ENCODE measurements at regions of chr3 and their contacts with region 1.

Region 1: GRCh38 chr3:196195664-196196265 is 15.4 kb downstream of the ZDHHC19 start:
- DNase-seq: peak in 1 of 2 donors; percentile 48
- ATAC-seq: no peak
- H3K4me3 ChIP-seq: no peak overlapping the region
- H3K27ac ChIP-seq: no peak overlapping the region
- H3K4me1 ChIP-seq: peaks cover 11% of the 10 kb centered on the region
- H3K27me3 ChIP-seq: no peaks in the 10 kb centered on the region
- CTCF ChIP-seq: no peak

Region 2: GRCh38 chr3:196023947-196024346 is 171.8 kb before region 1 on chr3:
- intact Hi-C with region 1: loop called in 1 of 2 experiments (anchors 2 kb)
- DNase-seq: no peak
- ATAC-seq: no peak
- H3K4me3 ChIP-seq: no peak overlapping the region
- H3K27ac ChIP-seq: no peak overlapping the region
- H3K4me1 ChIP-seq: no peaks in the 10 kb centered on the region
- H3K27me3 ChIP-seq: no peaks in the 10 kb centered on the region
- CTCF ChIP-seq: no peak

Region 3: GRCh38 chr3:196073188-196073838 is 122.5 kb before region 1 on chr3:
- intact Hi-C with region 1: loop called (anchors 1 to 2 kb)
- DNase-seq: no peak
- ATAC-seq: peak; percentile 88 to 96 (median 94)
- H3K4me3 ChIP-seq: no peak overlapping the region
- H3K27ac ChIP-seq: no peak overlapping the region
- H3K4me1 ChIP-seq: peaks cover 5% of the 10 kb centered on the region
- H3K27me3 ChIP-seq: no peaks in the 10 kb centered on the region
- CTCF ChIP-seq: peak; percentile 75

Region 4: GRCh38 chr3:196081791-196082618 is 113.8 kb before region 1 on chr3 and contains the start of gene TFRC:
- intact Hi-C with region 1: loop called in 1 of 2 experiments (anchors 1 kb)
- DNase-seq: peak; percentile 97 to 98
- ATAC-seq: peak; percentile 96 to 97 (median 96)
- H3K4me3 ChIP-seq: peak within 1 kb of the TSS; percentile 100
- H3K27ac ChIP-seq: peak within 1 kb of the TSS; percentile 100
- H3K4me1 ChIP-seq: peaks cover 35% of the 10 kb centered on the region
- H3K27me3 ChIP-seq: no peaks in the 10 kb centered on the region
- CTCF ChIP-seq: no peak
- total RNA-seq, gene TFRC: 36.2 to 101 (median 63.0) TPM

Region 5: GRCh38 chr3:196339493-196340254 is 143.9 kb after region 1 on chr3:
- intact Hi-C with region 1: no loop called
- DNase-seq: no peak
- ATAC-seq: no peak
- H3K4me3 ChIP-seq: no peak overlapping the region
- H3K27ac ChIP-seq: no peak overlapping the region
- H3K4me1 ChIP-seq: no peaks in the 10 kb centered on the region
- H3K27me3 ChIP-seq: no peaks in the 10 kb centered on the region
- CTCF ChIP-seq: no peak

Region 6: GRCh38 chr3:196554205-196554604 is 358.4 kb after region 1 on chr3:
- intact Hi-C with region 1: no loop called
- DNase-seq: no peak
- ATAC-seq: no peak
- H3K4me3 ChIP-seq: no peak overlapping the region
- H3K27ac ChIP-seq: peak overlapping the region; percentile 62
- H3K4me1 ChIP-seq: peaks cover 10% of the 10 kb centered on the region
- H3K27me3 ChIP-seq: no peaks in the 10 kb centered on the region
- CTCF ChIP-seq: no peak

Region 7: DNA sequence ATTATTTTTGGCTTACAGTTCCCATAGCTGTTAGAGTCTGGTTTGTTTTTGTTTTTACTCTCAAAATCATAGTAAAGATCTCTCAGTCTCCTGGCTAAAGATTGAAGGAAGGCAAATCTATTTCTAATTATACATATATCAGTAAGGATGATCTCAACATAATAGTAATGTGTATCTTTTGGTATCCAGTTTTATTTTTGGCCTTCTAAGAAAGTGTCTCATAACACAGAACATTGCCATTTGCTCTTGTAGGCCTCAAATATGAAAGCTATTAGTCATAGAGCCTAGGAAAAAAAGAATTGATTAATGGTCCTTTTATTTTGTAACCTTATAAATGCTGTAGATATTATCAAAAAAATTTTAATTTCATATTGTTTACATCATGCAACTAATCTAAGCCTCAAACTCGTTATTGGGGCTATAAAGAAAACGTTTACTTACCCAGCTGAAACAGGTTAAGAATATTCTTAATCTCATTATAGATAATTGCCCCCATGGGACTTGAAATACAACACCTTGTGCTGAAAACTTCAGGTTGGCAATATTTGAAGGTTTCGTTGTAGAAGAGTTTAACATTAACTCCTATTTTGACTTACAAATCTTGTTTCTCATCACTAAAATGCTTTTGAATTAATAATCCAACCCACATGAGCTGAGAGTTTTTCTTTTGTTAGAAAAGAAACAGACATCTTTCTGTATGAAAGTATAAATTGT is 389.4 kb after region 1 on chr3:
- intact Hi-C with region 1: no loop called
- DNase-seq: no peak
- ATAC-seq: peak in 3 of 4 donors; percentile 39 to 56 (median 51)
- H3K4me3 ChIP-seq: no peak overlapping the region
- H3K27ac ChIP-seq: no peak overlapping the region
- H3K4me1 ChIP-seq: peaks cover 13% of the 10 kb centered on the region
- H3K27me3 ChIP-seq: no peaks in the 10 kb centered on the region
- CTCF ChIP-seq: no peak

Measured in psoas muscle (tissue), 8 donors.